ENCODE measurements at regions of chr1 and their contacts with region 1.

Region 1: GRCh38 chr1:32413507-32414185 is 19.4 kb upstream of the BSDC1 start:
- DNase-seq: peak; percentile 43 to 67
- ATAC-seq: peak; percentile 90 to 96
- H3K4me3 ChIP-seq: no peak overlapping the region
- H3K27ac ChIP-seq: no peak overlapping the region
- H3K4me1 ChIP-seq: no peaks in the 10 kb centered on the region
- CTCF ChIP-seq: peak; percentile 70
- EP300 ChIP-seq: no peak
- POLR2A ChIP-seq: no peak
- RAD21 ChIP-seq: peak; percentile 70 to 80; a peak in 4 of 5 replicates

Region 2: DNA sequence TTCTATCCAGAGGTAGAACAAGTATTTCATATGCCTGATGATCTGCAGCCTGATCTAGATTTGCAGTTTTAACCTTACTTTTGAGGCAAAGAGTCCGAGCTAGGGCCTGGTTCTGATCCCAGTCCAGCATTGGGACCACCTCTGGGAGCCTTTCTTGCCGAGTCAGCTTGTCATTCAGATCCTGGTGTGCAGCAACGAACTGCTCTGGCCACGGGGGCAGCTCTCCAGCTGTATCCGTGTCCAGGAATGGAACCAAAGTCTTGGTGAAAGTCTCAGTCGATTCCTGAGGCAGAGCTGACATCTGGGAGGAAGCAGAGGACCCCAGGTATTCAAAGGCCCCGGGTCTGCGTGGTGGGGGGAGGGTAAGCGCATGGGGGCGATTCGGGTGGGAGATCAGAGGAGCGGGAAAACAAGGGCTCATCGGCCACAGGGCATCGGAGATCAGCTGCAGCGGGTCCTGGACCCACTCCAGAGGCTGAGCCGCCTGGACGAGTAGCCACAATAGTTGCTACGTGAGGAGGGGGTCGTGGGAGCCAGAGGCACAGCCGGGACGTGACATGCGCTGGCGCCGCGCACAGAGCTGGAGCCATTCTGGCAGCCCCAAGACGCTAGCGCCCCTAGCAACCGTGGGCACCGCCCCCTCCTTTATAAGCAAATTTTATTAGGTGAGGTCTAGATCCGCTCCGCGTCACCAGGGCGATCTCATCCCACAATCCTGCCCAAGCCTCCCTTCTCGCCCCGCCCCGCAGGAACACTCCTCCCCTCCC is 13.0 kb after region 1 on chr1:
- CTCF ChIA-PET with region 1: interaction called, 42 read pairs
- POLR2A ChIA-PET with region 1: no interaction called
- DNase-seq: no peak
- ATAC-seq: no peak
- H3K4me3 ChIP-seq: no peak overlapping the region
- H3K27ac ChIP-seq: no peak overlapping the region
- H3K4me1 ChIP-seq: 0 out of 3 replicates have a peak, but pooled peaks cover 3% of the 10 kb centered on the region
- CTCF ChIP-seq: no peak
- EP300 ChIP-seq: no peak
- POLR2A ChIP-seq: no peak
- RAD21 ChIP-seq: no peak

Region 3: DNA sequence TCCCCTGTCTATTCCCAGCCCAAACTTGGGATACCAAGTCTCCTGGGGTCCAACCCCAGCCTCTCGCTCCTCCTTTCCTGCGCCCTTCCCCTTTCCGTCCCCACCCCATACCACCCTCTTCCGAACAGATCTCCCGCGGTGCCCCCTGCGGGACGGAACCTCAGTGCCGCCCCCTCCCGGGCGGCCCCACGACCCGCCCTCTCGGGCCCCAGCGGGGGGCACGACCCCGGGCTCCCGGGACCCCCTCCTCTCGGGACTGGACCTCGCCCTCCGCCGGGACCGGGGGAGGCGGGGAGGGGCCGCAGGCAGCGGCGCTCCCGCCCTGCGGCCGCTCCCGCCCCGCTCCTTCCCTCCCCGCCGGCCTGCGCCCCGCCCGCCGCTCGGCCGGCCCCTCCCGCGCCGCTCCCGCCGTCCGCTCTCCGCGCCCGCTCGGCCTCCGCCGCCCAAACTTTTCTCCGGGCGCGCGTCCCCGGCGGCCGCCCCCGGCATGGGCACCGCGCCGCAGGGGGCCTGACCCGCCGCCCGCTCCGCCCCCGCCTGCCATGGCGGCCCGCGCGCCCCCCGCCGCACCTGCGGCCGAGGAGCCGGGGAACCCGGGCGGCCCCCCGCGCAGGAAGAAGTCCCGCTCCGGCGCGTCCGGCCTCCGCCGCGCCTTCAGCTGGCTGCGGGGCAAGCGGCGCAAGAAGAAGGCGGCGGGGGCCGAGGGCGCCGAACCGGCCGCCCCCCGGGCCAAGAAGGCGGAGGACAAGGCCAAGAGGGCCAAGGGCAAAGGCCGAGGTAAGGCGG is 328.0 kb after region 1 on chr1:
- CTCF ChIA-PET with region 1: no interaction called
- POLR2A ChIA-PET with region 1: no interaction called
- DNase-seq: peak in 1 of 2 experiments; percentile 69
- ATAC-seq: peak; percentile 70 to 76
- H3K4me3 ChIP-seq: peak overlapping the region; percentile 82
- H3K27ac ChIP-seq: peak overlapping the region; percentile 90 to 100
- H3K4me1 ChIP-seq: peaks cover 46% of the 10 kb centered on the region
- CTCF ChIP-seq: peak; percentile 52
- EP300 ChIP-seq: no peak
- POLR2A ChIP-seq: no peak
- RAD21 ChIP-seq: peak in 1 of 2 experiments; percentile 48; a peak in 3 of 5 replicates

Measured in A549 (cell line).